PC-9 (cell line): ENCODE measurements at regions of chr15 and their contacts with region 1.

Region 1: DNA sequence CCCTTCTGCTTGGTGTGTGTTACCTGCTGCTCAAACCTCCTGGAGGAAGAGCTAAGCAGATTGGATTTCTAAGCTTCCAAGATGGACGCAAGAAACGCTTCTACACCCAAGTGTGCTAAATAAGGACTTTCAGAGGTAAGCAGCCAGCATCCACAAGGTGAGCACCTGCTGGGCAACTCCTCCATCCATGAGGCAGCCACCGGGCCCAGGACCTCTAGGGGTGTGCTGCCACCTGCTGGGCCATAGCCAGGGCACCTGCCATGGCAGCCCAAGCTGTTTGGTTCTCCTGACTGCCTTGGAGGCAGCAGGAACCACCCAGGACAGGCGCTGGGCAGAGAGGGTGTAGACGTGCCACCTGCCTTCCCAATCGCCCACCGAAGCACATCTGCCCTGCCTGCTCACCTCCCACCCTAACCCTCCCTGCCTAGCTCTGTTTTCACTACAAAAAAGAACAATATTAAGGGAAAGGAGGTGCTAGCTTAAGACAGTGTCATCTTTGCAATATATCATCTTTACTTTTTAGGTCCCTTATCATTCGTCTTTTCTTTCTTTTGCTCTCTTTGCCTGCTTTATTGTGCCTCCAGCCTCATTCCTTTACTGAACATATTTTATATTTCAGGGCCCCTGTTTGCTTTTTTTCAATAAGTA is 12.9 kb downstream of the C15orf62 start:
- DNase-seq: peak; percentile 73 to 85
- H3K4me3 ChIP-seq: no peak overlapping the region
- H3K27ac ChIP-seq: no peak overlapping the region
- H3K4me1 ChIP-seq: peaks cover 35% of the 10 kb centered on the region
- H3K27me3 ChIP-seq: no peaks in the 10 kb centered on the region
- CTCF ChIP-seq: peak; percentile 79

Region 2: GRCh38 chr15:40633143-40633542 is 149.6 kb before region 1 on chr15:
- CTCF ChIA-PET with region 1: no interaction called
- POLR2A ChIA-PET with region 1: no interaction called
- intact Hi-C with region 1: no loop called
- DNase-seq: peak in 1 of 2 experiments; percentile 49
- H3K4me3 ChIP-seq: no peak overlapping the region
- H3K27ac ChIP-seq: no peak overlapping the region
- H3K4me1 ChIP-seq: no peaks in the 10 kb centered on the region
- H3K27me3 ChIP-seq: no peaks in the 10 kb centered on the region
- CTCF ChIP-seq: no peak

Region 3: DNA sequence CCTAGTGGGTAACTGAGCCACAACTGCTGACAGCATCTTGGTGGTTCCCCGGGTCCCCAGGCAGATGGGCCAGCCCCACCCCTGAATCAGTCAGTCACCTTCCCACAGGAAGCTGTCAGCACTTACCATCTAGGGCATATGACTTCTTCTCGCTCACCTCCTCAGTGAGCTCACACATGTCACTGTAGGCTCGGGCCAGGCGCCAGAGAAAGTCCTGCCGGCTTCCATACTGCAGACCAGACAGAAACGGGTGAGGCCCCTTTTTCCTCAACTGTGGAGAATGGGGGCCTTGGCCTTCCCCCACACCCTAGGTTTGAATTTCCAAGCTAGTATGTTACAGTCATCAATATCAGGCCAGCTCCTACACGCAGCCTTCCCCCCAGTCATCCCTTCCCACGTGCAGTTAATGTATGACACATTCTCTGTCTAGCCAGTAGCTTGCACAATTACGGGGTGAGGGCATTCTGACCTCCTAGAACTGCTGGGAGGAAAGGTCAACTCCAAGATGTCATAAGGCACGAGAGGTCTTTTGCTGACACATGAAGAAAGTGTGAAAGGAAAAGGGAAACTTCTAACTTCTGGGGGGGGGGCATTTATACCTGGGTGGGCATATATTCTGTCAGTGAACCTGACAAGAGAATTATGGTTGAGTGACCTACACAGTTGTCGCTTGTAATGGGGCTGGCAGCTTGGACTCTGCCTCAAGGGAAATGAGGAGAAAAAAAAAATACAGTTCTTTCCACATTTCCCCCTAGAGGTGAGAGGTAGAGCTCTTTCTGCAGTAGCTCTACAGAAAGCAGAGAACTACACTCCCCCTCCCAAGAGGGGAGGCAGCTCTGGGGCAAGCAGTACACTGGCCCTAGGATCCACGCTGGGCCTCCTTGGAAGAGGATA is 38.5 kb before region 1 on chr15:
- CTCF ChIA-PET with region 1: interaction called, 11 read pairs
- POLR2A ChIA-PET with region 1: no interaction called
- intact Hi-C with region 1: loop called (anchors 1 kb)
- DNase-seq: no peak
- H3K4me3 ChIP-seq: no peak overlapping the region
- H3K27ac ChIP-seq: no peak overlapping the region
- H3K4me1 ChIP-seq: no peaks in the 10 kb centered on the region
- H3K27me3 ChIP-seq: no peaks in the 10 kb centered on the region
- CTCF ChIP-seq: no peak

Region 4: DNA sequence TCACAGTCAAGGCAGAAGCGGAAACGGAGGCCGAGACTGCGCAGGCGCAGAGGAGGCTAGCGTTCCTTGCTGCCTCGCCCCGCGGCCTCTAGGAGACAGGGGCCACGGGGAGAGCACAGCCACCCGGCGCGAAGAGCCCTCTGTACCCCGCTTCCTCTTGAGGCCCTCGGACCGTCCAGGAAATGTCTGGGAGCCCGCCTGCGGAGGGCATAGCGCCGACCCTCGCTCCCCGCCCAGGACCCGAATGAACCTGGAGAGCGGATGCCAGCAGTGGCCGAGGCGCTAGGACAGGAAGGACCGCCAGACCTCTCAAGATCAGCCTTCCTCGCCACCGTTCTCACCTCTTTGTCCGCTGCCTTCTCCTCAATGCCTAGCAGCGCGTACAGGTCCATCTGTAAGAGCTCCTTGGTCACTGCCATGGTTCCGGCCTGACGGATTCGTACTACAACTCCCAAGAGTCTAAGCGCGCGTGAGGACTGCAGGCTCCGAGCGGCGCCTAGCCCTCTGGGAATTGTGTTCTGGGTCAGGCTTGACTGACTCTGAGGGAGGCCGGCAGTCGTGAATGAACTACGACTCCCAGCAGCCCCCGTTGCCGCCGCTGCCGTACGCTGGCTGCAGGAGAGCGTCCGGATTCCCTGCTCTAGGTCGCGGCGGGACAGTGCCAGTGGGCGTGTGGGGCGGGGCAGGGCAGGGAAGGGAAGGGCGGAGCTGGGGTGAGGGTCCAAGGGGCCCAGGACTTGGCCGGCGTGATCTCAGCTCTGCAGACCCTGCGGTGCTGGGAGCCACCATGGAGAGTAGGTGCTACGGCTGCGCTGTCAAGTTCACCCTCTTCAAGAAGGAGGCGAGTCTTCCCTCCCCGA is 24.6 kb after region 1 on chr15 and contains the starts of genes DNAJC17 and ZFYVE19:
- CTCF ChIA-PET with region 1: no interaction called
- POLR2A ChIA-PET with region 1: interaction called, 4 read pairs
- intact Hi-C with region 1: loop called (anchors 1 kb)
- DNase-seq: peak; percentile 91 to 93
- H3K4me3 ChIP-seq: peak within 1 kb of the TSS; percentile 99
- H3K27ac ChIP-seq: peak within 1 kb of the TSS; percentile 72
- H3K4me1 ChIP-seq: peaks cover 9% of the 10 kb centered on the region; the same call in 1 of the 2 replicates
- H3K27me3 ChIP-seq: no peaks in the 10 kb centered on the region
- CTCF ChIP-seq: no peak
- total RNA-seq, gene DNAJC17: 27.4 and 33.0 TPM in 2 replicates
- total RNA-seq, gene ZFYVE19: 32.6 and 33.1 TPM in 2 replicates

Region 5: GRCh38 chr15:40847205-40847961 is 64.7 kb after region 1 on chr15:
- CTCF ChIA-PET with region 1: no interaction called
- POLR2A ChIA-PET with region 1: interaction called, 4 read pairs
- intact Hi-C with region 1: loop called (anchors 1 kb)
- DNase-seq: peak; percentile 72 to 77
- H3K4me3 ChIP-seq: peak overlapping the region; percentile 71; the same call in 1 of the 2 replicates
- H3K27ac ChIP-seq: peak overlapping the region; percentile 93
- H3K4me1 ChIP-seq: peaks cover 31% of the 10 kb centered on the region
- H3K27me3 ChIP-seq: no peaks in the 10 kb centered on the region
- CTCF ChIP-seq: no peak